CD4-positive, alpha-beta T cell (primary cell): ENCODE measurements at regions of chr3 and their contacts with region 1.

Region 1: DNA sequence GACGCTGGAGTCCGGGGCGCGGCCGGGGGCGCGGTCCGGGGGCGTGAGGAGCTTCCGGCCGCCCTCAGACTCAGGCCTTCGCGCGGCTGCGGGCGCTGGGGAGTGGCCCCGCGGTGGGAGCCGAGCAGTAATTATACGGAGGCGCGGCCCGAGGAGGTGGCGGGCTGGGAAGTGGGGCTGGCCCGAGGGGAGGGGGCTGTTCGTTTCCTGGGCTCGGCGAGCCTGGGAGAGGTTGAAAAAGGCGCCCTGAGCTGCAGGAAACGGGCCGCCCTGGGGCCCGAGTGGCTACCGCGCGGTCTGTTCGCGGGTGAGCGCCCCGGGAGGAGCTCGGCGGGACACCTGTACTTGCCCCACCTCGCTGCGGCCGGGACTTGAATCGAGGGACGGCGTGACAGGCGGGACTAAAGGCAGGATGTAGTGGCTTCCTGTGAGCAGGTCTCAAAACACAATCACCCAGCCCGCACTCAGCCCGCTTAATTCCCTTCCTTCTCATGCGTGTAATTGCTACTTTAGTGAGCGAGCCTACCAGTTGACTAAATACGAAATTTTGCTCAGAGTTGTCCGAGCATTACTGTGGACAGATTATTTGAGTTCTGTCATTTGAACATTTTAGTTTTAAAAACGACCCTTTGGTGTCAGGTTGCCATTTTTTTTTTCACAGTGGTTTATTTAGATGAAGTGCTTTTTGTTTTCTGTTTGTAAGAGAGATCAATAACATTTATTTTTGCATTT is 860 bp downstream of the RASA2 start:
- DNase-seq: peak; percentile 73 to 95 (median 82)
- ATAC-seq: peak; percentile 64
- H3K4me3 ChIP-seq: peak overlapping the region; percentile 75
- H3K4me3 Mint-ChIP-seq: peak overlapping the region; percentile 87
- H3K27ac ChIP-seq: peak overlapping the region; percentile 75 to 97
- H3K27ac Mint-ChIP-seq: peak overlapping the region; percentile 82
- H3K4me1 ChIP-seq: peaks cover 33% of the 10 kb centered on the region
- H3K4me1 Mint-ChIP-seq: peaks cover 73% of the 10 kb centered on the region
- H3K27me3 ChIP-seq: no peaks in the 10 kb centered on the region
- H3K27me3 Mint-ChIP-seq: no peaks in the 10 kb centered on the region
- CTCF ChIP-seq: no peak

Region 2: DNA sequence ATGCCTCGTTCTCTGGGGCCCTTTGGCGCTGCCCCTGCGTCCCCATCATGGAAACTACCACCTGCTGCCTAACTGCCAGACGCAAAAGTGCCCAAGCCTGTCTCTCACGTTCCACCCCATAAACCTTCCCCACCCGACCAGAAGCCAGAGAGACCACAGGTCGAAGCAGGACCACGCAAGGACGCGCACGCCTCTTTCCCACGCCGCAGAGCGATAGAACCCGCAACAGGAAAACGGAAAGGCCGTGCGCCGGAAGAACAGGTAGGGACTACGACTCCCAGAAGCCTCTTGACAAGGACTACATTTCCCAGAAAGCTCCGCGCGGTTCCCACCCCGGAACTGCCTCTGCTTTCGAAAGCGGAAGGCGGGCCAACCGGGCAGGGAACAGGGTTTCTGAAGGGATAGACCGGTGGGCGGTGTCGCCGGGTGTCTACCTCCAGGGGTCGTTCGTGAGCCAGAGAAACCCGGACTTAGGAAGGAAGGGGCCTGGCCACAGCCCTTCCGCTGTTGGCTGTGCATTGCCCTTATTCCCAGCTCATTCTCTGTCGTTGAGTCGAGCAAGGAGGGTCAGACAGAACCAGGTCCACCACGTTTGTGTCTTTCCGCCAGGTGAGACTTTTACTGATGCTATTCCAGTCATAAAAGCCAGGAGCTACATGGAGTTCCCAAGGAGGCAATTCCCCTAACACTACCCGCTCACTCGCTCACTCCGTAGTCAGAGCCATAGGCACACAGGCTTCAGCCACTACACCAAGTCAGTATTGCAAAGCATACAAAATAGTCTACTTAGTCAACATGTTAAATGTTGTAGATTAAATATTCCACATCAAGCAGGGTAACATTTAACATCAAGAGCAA is 176.0 kb before region 1 on chr3:
- CTCF ChIA-PET with region 1: no interaction called
- POLR2A ChIA-PET with region 1: interaction called, 18 read pairs
- intact Hi-C with region 1: no loop called
- DNase-seq: peak; percentile 93 to 99 (median 97)
- ATAC-seq: peak; percentile 88
- H3K4me3 ChIP-seq: peak overlapping the region; percentile 86
- H3K4me3 Mint-ChIP-seq: peak overlapping the region; percentile 97
- H3K27ac ChIP-seq: peak overlapping the region; percentile 62 to 75
- H3K27ac Mint-ChIP-seq: peak overlapping the region; percentile 92
- H3K4me1 ChIP-seq: peaks cover 48% of the 10 kb centered on the region
- H3K4me1 Mint-ChIP-seq: peaks cover 67% of the 10 kb centered on the region
- H3K27me3 ChIP-seq: no peaks in the 10 kb centered on the region
- H3K27me3 Mint-ChIP-seq: no peaks in the 10 kb centered on the region
- CTCF ChIP-seq: peak; percentile 65

Region 3: GRCh38 chr3:141498598-141499223 is 11.0 kb after region 1 on chr3:
- CTCF ChIA-PET with region 1: interaction called, 19 read pairs
- POLR2A ChIA-PET with region 1: interaction called, 249 read pairs
- intact Hi-C with region 1: loop called (anchors 1 kb)
- DNase-seq: peak; percentile 64 to 97 (median 78)
- ATAC-seq: peak; percentile 87
- H3K4me3 ChIP-seq: peak overlapping the region; percentile 45
- H3K4me3 Mint-ChIP-seq: peak overlapping the region; percentile 86
- H3K27ac ChIP-seq: peak overlapping the region; percentile 77 to 90
- H3K27ac Mint-ChIP-seq: no peak overlapping the region
- H3K4me1 ChIP-seq: peaks cover 28% of the 10 kb centered on the region
- H3K4me1 Mint-ChIP-seq: peaks cover 69% of the 10 kb centered on the region
- H3K27me3 ChIP-seq: no peaks in the 10 kb centered on the region
- H3K27me3 Mint-ChIP-seq: no peaks in the 10 kb centered on the region
- CTCF ChIP-seq: no peak

Region 4: DNA sequence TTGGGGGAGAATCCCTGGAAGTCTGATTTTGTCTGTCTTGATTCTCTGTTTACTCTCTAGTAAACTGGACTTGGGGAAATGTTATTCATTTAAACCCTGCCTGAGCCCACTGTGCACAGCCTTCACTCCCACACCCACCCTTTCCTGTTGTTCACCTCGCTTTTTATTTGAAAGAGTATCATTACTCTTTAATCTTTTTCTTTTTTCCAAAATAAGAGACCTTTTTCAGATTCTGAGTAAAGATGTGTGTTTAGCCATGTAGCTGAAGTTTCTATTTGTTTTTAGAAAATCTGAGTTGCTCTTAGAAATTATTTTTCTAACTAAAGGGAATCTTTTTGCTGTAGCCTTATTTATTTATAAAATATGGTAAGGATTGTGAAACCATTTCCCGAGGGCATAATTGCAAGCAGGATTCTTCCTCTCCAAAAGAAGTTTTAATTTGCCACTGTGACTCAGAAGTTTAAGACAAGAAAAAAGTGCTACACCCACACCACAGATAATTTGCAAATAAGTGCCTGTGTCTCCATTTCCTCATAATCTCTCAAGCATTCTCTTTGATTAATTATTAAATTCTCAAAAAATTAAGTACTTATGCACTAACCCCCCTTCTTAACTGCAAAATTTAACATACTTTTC is 42.6 kb after region 1 on chr3:
- CTCF ChIA-PET with region 1: interaction called, 3 read pairs
- POLR2A ChIA-PET with region 1: interaction called, 51 read pairs
- intact Hi-C with region 1: loop called in 1 of 2 experiments (anchors 5 kb)
- DNase-seq: peak in 8 of 14 experiments; percentile 6 to 71 (median 24)
- ATAC-seq: peak; percentile 81
- H3K4me3 ChIP-seq: peak overlapping the region; percentile 13
- H3K4me3 Mint-ChIP-seq: peak overlapping the region; percentile 86
- H3K27ac ChIP-seq: peak overlapping the region; percentile 51 to 64
- H3K27ac Mint-ChIP-seq: peak overlapping the region; percentile 94
- H3K4me1 ChIP-seq: peaks cover 8% of the 10 kb centered on the region
- H3K4me1 Mint-ChIP-seq: peaks cover 83% of the 10 kb centered on the region
- H3K27me3 ChIP-seq: no peaks in the 10 kb centered on the region
- H3K27me3 Mint-ChIP-seq: no peaks in the 10 kb centered on the region
- CTCF ChIP-seq: no peak

Region 5: DNA sequence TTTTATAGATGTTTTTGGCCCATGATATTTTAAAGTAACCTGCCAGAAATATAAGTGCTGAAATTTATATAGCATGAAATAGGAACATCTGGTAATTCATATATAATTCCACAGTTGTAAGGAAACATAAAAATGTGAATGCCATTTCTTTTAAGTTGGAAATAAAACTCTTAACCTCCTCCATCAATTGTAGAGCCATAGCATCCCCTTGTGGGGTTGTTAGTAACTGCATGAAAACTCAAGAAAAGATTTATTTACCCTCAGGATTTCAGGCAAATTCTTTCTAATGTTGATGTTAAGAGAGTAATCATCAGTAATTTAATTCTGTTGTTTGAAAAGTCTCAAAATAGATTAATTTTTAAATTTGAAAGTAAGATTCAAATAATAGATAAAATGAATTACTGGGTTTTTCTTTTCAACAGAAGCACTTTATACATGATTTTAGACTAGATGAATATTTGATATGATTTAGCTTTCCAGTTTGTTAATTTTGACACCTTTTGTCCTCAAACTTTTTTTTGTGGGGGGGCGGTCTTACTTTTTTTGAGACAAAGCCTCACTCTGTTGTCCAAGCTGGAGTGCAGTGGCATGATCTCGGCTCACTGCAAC is 73.8 kb after region 1 on chr3:
- CTCF ChIA-PET with region 1: interaction called, 5 read pairs
- POLR2A ChIA-PET with region 1: interaction called, 91 read pairs
- intact Hi-C with region 1: loop called in 1 of 2 experiments (anchors 1 kb)
- DNase-seq: peak in 9 of 14 experiments; percentile 14 to 85 (median 39)
- ATAC-seq: peak; percentile 60
- H3K4me3 ChIP-seq: no peak overlapping the region
- H3K4me3 Mint-ChIP-seq: peak overlapping the region; percentile 55
- H3K27ac ChIP-seq: no peak overlapping the region
- H3K27ac Mint-ChIP-seq: peak overlapping the region; percentile 67
- H3K4me1 ChIP-seq: peaks cover 3% of the 10 kb centered on the region
- H3K4me1 Mint-ChIP-seq: peaks cover 40% of the 10 kb centered on the region
- H3K27me3 ChIP-seq: no peaks in the 10 kb centered on the region
- H3K27me3 Mint-ChIP-seq: no peaks in the 10 kb centered on the region
- CTCF ChIP-seq: peak; percentile 98

Region 6: GRCh38 chr3:142332390-142332789 is 844.7 kb after region 1 on chr3:
- CTCF ChIA-PET with region 1: no interaction called
- POLR2A ChIA-PET with region 1: no interaction called
- intact Hi-C with region 1: no loop called
- DNase-seq: no peak
- ATAC-seq: no peak
- H3K4me3 ChIP-seq: no peak overlapping the region
- H3K4me3 Mint-ChIP-seq: no peak overlapping the region
- H3K27ac ChIP-seq: no peak overlapping the region
- H3K27ac Mint-ChIP-seq: no peak overlapping the region
- H3K4me1 ChIP-seq: no peaks in the 10 kb centered on the region
- H3K4me1 Mint-ChIP-seq: no peaks in the 10 kb centered on the region
- H3K27me3 ChIP-seq: no peaks in the 10 kb centered on the region
- H3K27me3 Mint-ChIP-seq: no peaks in the 10 kb centered on the region
- CTCF ChIP-seq: no peak